ENCODE measurements at regions of chr1 and their contacts with region 1.

Region 1: DNA sequence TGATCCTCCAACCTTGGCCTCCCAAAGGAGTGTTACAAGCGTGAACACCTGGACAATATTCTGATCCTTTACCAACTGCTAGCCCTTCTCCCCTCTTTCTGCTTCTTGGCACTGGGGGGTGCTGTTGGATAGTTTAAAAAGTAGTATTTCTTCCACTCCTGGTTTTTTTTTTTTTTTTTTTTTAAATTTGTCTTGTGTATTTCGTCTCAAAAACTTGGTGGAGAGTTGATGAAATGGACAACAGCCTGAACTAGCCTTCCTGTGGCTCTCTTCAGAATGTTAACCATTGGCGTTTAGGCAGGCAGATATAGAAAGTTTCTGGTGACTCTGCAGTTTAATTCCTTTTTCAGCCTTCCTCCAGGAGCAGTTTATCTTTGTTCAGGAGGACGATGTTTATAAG is 69.7 kb upstream of the USP24 start:
- DNase-seq: peak; percentile 64
- H3K4me3 ChIP-seq: no peak overlapping the region
- H3K27ac ChIP-seq: no peak overlapping the region
- H3K4me1 ChIP-seq: peaks cover 12% of the 10 kb centered on the region
- H3K27me3 ChIP-seq: no peaks in the 10 kb centered on the region
- CTCF ChIP-seq: peak; percentile 56 to 59
- POLR2A ChIP-seq: no peak

Region 2: DNA sequence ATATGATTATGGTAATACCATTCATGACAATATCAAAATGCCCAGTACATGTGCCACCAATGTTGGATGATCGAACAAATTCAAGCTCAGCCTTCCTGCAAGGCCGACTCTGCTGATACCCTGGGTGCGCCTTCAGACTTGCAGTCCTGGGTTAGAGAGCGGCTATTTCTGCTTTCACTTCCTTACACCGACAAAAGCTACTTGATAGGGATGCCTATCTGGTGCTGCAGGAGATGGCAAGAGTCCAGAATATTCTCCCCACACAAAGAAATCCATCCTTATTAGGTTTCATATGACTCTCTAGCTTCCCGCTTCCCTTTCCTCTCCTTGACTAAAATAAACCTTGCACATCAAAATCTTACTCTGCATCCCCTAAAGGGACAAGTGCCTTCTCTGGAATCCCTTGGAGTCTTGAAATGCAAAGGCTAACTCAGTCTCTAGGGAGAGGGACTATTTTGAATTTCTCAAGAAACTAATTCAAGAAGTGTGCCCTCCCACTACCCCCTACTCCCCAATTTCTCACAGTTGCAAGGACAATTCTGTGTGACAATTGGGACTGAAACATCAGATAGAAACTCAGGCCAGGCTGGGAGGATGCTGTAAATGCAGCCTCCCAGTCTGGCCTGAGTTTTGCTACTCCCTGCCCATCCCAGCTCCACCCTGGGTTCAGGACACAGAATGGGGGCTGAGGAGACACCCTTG is 33.4 kb after region 1 on chr1:
- CTCF ChIA-PET with region 1: interaction called, 12 read pairs
- POLR2A ChIA-PET with region 1: no interaction called
- dilution Hi-C with region 1: no loop called
- intact Hi-C with region 1: no loop called
- DNase-seq: peak; percentile 85
- H3K4me3 ChIP-seq: no peak overlapping the region
- H3K27ac ChIP-seq: peak overlapping the region; percentile 9
- H3K4me1 ChIP-seq: peaks cover 55% of the 10 kb centered on the region
- H3K27me3 ChIP-seq: no peaks in the 10 kb centered on the region
- CTCF ChIP-seq: no peak
- POLR2A ChIP-seq: no peak

Region 3: DNA sequence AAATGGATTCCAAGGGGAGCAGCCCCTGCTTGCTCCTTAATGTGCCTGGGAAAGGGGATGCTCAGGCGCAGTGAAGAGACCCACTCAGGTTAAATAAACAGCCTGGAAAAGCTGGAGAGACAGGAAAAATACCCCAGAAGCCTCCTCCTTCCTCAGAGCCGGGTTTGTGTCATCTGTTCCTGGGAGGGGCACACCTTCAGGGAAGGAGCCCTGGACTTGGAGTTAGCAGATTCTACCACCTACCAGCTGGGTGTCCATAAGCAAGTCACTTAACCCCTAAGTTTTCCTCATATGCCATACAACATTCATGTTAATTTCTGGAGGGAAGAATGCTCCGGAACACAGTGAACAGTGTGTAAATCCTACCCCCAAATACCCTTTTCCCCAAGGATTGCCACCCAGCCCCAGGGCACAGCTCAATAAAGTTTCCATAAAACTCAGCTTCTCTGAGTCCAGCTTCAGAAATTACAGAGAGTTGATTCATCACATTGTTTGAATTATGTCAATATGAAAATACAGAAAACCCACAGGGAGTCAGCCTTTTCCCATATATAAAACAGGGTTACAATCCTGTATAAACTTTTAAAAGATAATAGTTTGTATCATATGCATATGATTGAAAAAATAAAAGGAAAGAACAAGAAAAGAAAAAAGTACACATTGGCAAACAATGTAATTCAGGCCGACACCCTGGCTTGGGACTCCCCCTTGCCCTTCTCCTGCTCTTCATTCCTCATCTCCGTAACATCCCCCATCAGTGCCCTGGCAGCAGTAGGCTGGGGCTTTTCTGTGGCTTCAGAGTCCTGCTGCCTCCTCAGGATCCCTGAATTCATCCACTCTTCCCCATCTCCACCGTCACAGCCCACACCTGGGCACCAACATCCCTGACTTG is 222.1 kb after region 1 on chr1:
- CTCF ChIA-PET with region 1: no interaction called
- POLR2A ChIA-PET with region 1: no interaction called
- dilution Hi-C with region 1: no loop called
- intact Hi-C with region 1: no loop called
- DNase-seq: no peak
- H3K4me3 ChIP-seq: no peak overlapping the region
- H3K27ac ChIP-seq: no peak overlapping the region
- H3K4me1 ChIP-seq: no peaks in the 10 kb centered on the region
- H3K27me3 ChIP-seq: peaks cover 1 to 2% of the 10 kb centered on the region in 2 experiments
- CTCF ChIP-seq: no peak
- POLR2A ChIP-seq: no peak

Region 4: GRCh38 chr1:55632906-55633305 is 348.1 kb after region 1 on chr1:
- CTCF ChIA-PET with region 1: no interaction called
- POLR2A ChIA-PET with region 1: no interaction called
- dilution Hi-C with region 1: no loop called
- intact Hi-C with region 1: no loop called
- DNase-seq: no peak
- H3K4me3 ChIP-seq: no peak overlapping the region
- H3K27ac ChIP-seq: no peak overlapping the region
- H3K4me1 ChIP-seq: no peaks in the 10 kb centered on the region
- H3K27me3 ChIP-seq: no peaks in the 10 kb centered on the region
- CTCF ChIP-seq: no peak
- POLR2A ChIP-seq: no peak

Region 5: DNA sequence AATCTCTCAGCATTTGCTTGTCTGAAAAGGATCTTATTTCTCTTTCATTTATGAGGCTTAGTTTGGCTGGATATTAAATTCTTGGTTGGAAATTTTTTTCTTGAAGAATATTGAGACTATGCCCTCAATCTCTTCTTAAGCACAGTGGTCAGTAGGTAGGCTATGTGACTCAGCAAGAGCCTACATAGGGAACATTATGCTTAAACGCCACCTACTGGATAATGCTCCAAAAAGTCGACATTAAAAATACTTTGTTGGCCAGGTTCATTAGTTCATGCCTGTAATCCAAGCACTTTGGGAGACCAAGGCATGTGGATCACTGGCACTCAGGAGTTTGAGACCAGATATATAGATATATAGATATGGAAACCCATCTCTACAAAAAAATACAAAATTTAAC is 608.3 kb after region 1 on chr1:
- CTCF ChIA-PET with region 1: no interaction called
- POLR2A ChIA-PET with region 1: no interaction called
- dilution Hi-C with region 1: no loop called
- intact Hi-C with region 1: loop called (anchors 10 kb)
- DNase-seq: peak; percentile 56
- H3K4me3 ChIP-seq: no peak overlapping the region
- H3K27ac ChIP-seq: no peak overlapping the region
- H3K4me1 ChIP-seq: no peaks in the 10 kb centered on the region
- H3K27me3 ChIP-seq: no peaks in the 10 kb centered on the region
- CTCF ChIP-seq: peak; percentile 22 to 27
- POLR2A ChIP-seq: no peak

Region 6: GRCh38 chr1:56709269-56709880 is 1424.5 kb after region 1 on chr1:
- CTCF ChIA-PET with region 1: interaction called, 11 read pairs
- POLR2A ChIA-PET with region 1: no interaction called
- dilution Hi-C with region 1: no loop called
- intact Hi-C with region 1: loop called (anchors 1 kb)
- DNase-seq: peak; percentile 69
- H3K4me3 ChIP-seq: no peak overlapping the region
- H3K27ac ChIP-seq: no peak overlapping the region
- H3K4me1 ChIP-seq: peaks cover 2% of the 10 kb centered on the region
- H3K27me3 ChIP-seq: no peaks in the 10 kb centered on the region
- CTCF ChIP-seq: peak; percentile 32 to 42
- POLR2A ChIP-seq: no peak

Region 7: GRCh38 chr1:56821140-56821797 is 1536.4 kb after region 1 on chr1:
- CTCF ChIA-PET with region 1: interaction called, 5 read pairs
- POLR2A ChIA-PET with region 1: no interaction called
- dilution Hi-C with region 1: no loop called
- intact Hi-C with region 1: loop called (anchors 5 kb)
- DNase-seq: peak; percentile 62
- H3K4me3 ChIP-seq: no peak overlapping the region
- H3K27ac ChIP-seq: no peak overlapping the region
- H3K4me1 ChIP-seq: no peaks in the 10 kb centered on the region
- H3K27me3 ChIP-seq: no peaks in the 10 kb centered on the region
- CTCF ChIP-seq: peak; percentile 93 to 95
- POLR2A ChIP-seq: no peak